ENCODE measurements at regions of chr7 and their contacts with region 1.

Region 1: GRCh38 chr7:139995017-139995931 is 67.5 kb downstream of the PARP12 start:
- DNase-seq: peak; percentile 78
- H3K4me3 ChIP-seq: no peak overlapping the region
- H3K27ac ChIP-seq: peak overlapping the region; percentile 81
- H3K27me3 ChIP-seq: no peaks in the 10 kb centered on the region
- CTCF ChIP-seq: no peak

Region 2: GRCh38 chr7:139829775-139830117 is 165.5 kb before region 1 on chr7:
- CTCF ChIA-PET with region 1: no interaction called
- POLR2A ChIA-PET with region 1: no interaction called
- DNase-seq: no peak
- H3K4me3 ChIP-seq: peak overlapping the region; percentile 22; the same call in 1 of the 2 replicates
- H3K27ac ChIP-seq: peak overlapping the region; percentile 74
- H3K27me3 ChIP-seq: no peaks in the 10 kb centered on the region
- CTCF ChIP-seq: no peak

Region 3: GRCh38 chr7:139960157-139960556 is 35.1 kb before region 1 on chr7:
- CTCF ChIA-PET with region 1: no interaction called
- POLR2A ChIA-PET with region 1: interaction called, 10 read pairs
- DNase-seq: no peak
- H3K4me3 ChIP-seq: no peak overlapping the region
- H3K27ac ChIP-seq: peak overlapping the region; percentile 87
- H3K27me3 ChIP-seq: no peaks in the 10 kb centered on the region
- CTCF ChIP-seq: no peak